ENCODE measurements at regions of chr20 and their contacts with region 1.

Region 1: GRCh38 chr20:31661625-31662371 is 24.1 kb downstream of the COX4I2 start:
- DNase-seq: peak; percentile 69
- ATAC-seq: peak; percentile 89
- H3K4me3 Mint-ChIP-seq: peak overlapping the region; percentile 76
- H3K27ac Mint-ChIP-seq: peak overlapping the region; percentile 75
- H3K4me1 Mint-ChIP-seq: peaks cover 30% of the 10 kb centered on the region
- H3K27me3 Mint-ChIP-seq: no peaks in the 10 kb centered on the region
- CTCF ChIP-seq: no peak

Region 2: GRCh38 chr20:31560094-31560899 is 101.5 kb before region 1 on chr20:
- CTCF ChIA-PET with region 1: interaction called, 10 read pairs
- POLR2A ChIA-PET with region 1: interaction called, 3 read pairs
- intact Hi-C with region 1: no loop called
- DNase-seq: peak; percentile 61
- ATAC-seq: peak; percentile 67
- H3K4me3 Mint-ChIP-seq: no peak overlapping the region
- H3K27ac Mint-ChIP-seq: no peak overlapping the region
- H3K4me1 Mint-ChIP-seq: peaks cover 4% of the 10 kb centered on the region
- H3K27me3 Mint-ChIP-seq: no peaks in the 10 kb centered on the region
- CTCF ChIP-seq: peak; percentile 82

Region 3: DNA sequence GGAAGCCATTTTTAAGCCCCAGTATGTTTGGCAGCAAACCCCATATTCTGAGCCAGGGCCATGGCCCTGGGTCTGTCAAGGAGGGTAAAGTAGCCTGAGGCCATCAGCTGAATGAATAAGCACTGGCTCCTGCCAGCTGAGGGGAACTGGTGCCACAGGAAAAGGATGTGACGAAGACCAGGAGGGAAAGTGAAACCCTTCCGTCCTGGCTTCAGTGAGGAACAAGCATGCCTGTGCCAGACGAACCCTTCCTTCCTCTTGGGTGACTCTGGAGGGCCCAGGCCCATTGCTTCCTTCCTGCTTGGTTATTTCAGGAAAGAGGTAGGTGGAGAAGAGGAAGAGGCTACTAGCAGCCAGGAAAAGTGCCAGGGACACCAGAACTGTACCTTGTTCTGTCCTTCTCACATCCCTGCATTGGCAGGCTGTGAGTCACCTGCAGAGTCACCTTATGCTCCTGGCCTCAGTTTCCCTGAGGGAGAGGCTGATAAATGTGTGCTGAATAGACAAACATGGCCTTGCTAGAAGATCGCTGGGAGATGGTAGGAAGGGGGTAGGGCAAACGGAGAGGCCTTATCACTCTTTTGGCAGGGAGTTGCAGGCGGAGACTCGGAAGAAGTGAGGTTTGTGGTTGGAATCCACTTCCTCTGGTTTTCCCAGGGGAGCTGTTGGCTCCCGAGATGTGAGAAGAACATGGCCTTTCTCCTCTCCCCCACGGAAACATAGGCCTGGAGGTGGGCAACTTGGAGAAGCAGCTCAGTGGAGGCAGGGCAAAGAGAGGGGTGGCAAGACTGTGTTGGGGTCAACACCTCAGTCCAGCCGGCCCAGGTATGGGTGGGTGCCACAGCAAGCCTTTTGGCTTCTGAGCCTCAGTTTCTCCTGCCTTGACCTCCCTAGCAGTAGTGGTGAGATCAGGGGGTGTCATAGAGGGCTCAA is 13.4 kb after region 1 on chr20:
- CTCF ChIA-PET with region 1: interaction called, 28 read pairs
- POLR2A ChIA-PET with region 1: interaction called, 16 read pairs
- intact Hi-C with region 1: no loop called
- DNase-seq: peak; percentile 26
- ATAC-seq: peak; percentile 82
- H3K4me3 Mint-ChIP-seq: peak overlapping the region; percentile 89
- H3K27ac Mint-ChIP-seq: peak overlapping the region; percentile 94
- H3K4me1 Mint-ChIP-seq: peaks cover 44% of the 10 kb centered on the region
- H3K27me3 Mint-ChIP-seq: no peaks in the 10 kb centered on the region
- CTCF ChIP-seq: no peak

Region 4: GRCh38 chr20:31684153-31685015 is 22.6 kb after region 1 on chr20:
- CTCF ChIA-PET with region 1: interaction called, 24 read pairs
- POLR2A ChIA-PET with region 1: interaction called, 16 read pairs
- intact Hi-C with region 1: loop called (anchors 2 kb)
- DNase-seq: no peak
- ATAC-seq: peak; percentile 79
- H3K4me3 Mint-ChIP-seq: peak overlapping the region; percentile 68
- H3K27ac Mint-ChIP-seq: peak overlapping the region; percentile 83
- H3K4me1 Mint-ChIP-seq: peaks cover 59% of the 10 kb centered on the region
- H3K27me3 Mint-ChIP-seq: no peaks in the 10 kb centered on the region
- CTCF ChIP-seq: no peak

Region 5: DNA sequence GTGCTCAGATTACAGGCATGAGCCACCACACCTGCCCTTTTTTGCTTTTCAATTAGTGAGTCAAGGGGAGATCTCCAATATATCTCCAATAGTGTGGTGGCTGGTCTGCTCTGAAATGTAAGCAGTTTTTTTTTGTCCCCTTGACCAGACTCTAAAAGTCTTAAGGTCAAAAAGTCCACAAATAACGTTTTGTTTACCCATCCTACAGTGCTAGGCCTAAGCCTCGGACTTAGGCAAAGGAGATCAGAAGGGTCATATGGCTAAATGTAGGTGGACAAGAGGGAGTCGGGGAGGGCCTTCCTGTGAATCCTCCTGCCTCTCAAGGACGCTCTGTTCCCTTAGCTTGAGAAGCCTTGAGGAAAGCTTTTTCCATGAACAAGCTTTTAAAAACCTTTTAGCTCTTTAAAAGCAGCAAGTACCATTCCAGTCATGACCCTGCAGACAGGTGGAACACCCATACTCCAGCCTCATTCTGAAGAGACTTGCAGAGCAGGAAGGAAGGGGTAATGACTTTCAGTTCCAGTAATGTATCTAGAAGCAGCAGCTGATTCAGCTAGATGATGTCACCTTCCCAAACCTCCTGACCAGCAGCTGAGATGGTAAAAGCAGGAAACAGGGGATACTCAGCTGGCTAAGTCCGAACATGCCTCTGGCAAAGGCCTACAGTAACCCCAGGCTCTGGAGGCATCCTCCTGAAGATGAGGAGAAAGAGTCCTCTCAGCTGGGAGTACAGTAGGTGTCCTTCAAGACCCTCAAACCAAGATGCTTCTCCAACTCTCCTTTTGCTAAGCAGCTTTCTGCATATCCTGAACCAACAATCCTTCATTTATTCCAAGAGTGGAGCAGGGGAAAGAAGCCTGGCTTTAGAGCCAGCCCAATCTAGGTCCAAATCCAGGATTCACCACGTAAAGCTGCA is 37.3 kb after region 1 on chr20:
- CTCF ChIA-PET with region 1: interaction called, 20 read pairs
- POLR2A ChIA-PET with region 1: interaction called, 3 read pairs
- intact Hi-C with region 1: no loop called
- DNase-seq: no peak
- ATAC-seq: peak; percentile 71
- H3K4me3 Mint-ChIP-seq: no peak overlapping the region
- H3K27ac Mint-ChIP-seq: peak overlapping the region; percentile 71
- H3K4me1 Mint-ChIP-seq: peaks cover 44% of the 10 kb centered on the region
- H3K27me3 Mint-ChIP-seq: no peaks in the 10 kb centered on the region
- CTCF ChIP-seq: no peak

Region 6: GRCh38 chr20:31717478-31718201 is 55.8 kb after region 1 on chr20:
- CTCF ChIA-PET with region 1: interaction called, 239 read pairs
- POLR2A ChIA-PET with region 1: interaction called, 132 read pairs
- intact Hi-C with region 1: no loop called
- DNase-seq: no peak
- ATAC-seq: peak; percentile 79
- H3K4me3 Mint-ChIP-seq: peak overlapping the region; percentile 82
- H3K27ac Mint-ChIP-seq: peak overlapping the region; percentile 93
- H3K4me1 Mint-ChIP-seq: peaks cover 82% of the 10 kb centered on the region
- H3K27me3 Mint-ChIP-seq: no peaks in the 10 kb centered on the region
- CTCF ChIP-seq: no peak

Measured in activated B cell treated with CpG ODN at 0.5 μM for 24 hours (primary cell).